ENCODE measurements at regions of chr18 and their contacts with region 1.

Region 1: GRCh38 chr18:24138789-24139616 is at the start of gene CABYR:
- DNase-seq: peak; percentile 54 to 77
- H3K4me3 ChIP-seq: peak within 1 kb of the TSS; percentile 53
- H3K27ac ChIP-seq: peak within 1 kb of the TSS; percentile 91
- H3K4me1 ChIP-seq: peaks cover 31% of the 10 kb centered on the region
- H3K27me3 ChIP-seq: no peaks in the 10 kb centered on the region
- CTCF ChIP-seq: no peak
- total RNA-seq, gene CABYR: 19.5 and 32.4 TPM in 2 replicates

Region 2: GRCh38 chr18:23693845-23694244 is 445.2 kb before region 1 on chr18:
- CTCF ChIA-PET with region 1: no interaction called
- POLR2A ChIA-PET with region 1: interaction called, 10 read pairs
- intact Hi-C with region 1: no loop called
- DNase-seq: no peak
- H3K4me3 ChIP-seq: no peak overlapping the region
- H3K27ac ChIP-seq: 0 out of 2 replicates have a peak overlapping the region, but pooled peaks have one; percentile 10
- H3K4me1 ChIP-seq: peaks cover 34% of the 10 kb centered on the region
- H3K27me3 ChIP-seq: no peaks in the 10 kb centered on the region
- CTCF ChIP-seq: no peak

Region 3: GRCh38 chr18:23967321-23968089 is 171.5 kb before region 1 on chr18:
- CTCF ChIA-PET with region 1: no interaction called
- POLR2A ChIA-PET with region 1: no interaction called
- intact Hi-C with region 1: no loop called
- DNase-seq: no peak
- H3K4me3 ChIP-seq: no peak overlapping the region
- H3K27ac ChIP-seq: no peak overlapping the region
- H3K4me1 ChIP-seq: no peaks in the 10 kb centered on the region
- H3K27me3 ChIP-seq: no peaks in the 10 kb centered on the region
- CTCF ChIP-seq: no peak

Region 4: DNA sequence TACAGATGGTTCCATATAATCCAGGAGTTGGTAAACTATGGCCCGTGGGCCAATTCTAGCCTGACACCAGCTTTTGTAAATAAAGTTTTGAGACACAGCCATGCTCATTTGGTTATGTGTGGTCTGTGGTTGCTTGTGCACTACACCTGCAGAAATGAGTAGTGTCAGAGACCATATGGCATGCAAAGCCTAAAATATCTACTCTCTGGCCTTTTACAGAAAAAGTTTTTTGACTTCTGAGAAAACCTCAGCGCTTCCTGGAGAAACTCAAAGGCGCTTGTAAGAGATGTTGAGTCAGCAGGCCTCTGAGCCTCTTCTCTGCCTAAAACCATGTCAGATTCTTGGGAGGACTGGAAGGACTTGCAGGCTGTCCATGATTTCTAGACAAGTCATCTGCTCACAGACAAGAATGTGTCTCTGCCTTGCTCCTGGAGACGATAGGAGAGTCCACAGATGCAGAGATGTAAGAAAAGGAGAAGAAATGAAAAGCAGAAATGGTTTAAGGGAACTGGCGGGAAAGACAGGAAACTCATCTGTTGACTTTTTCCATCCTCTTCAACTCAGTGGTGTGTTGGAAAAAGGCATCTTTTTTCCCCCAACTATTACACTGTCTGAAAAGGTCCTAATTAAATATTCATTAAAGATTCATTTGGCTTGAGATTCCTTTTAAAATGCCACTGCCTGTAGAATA is 119.2 kb before region 1 on chr18:
- CTCF ChIA-PET with region 1: no interaction called
- POLR2A ChIA-PET with region 1: interaction called, 11 read pairs
- intact Hi-C with region 1: no loop called
- DNase-seq: no peak
- H3K4me3 ChIP-seq: no peak overlapping the region
- H3K27ac ChIP-seq: no peak overlapping the region
- H3K4me1 ChIP-seq: peaks cover 50% of the 10 kb centered on the region
- H3K27me3 ChIP-seq: no peaks in the 10 kb centered on the region
- CTCF ChIP-seq: no peak

Region 5: DNA sequence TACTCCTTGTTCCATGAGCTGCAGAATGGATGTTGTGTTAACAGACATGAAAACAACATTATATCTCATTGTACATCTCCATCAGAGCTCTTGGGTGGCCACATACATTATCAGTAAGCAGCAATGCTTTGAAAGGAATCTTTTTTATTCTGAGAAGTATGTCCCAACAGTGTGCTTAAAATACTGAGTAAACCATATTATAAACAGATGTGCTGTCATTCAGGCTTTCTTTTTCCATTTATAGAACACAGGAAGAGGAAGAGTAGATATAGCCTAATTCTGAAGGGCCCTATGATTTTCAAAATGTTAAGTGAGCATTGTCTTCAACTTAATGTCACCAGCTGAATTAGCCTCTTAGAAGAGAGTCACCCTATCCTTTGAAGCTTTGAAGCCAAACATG is 44.4 kb before region 1 on chr18:
- CTCF ChIA-PET with region 1: no interaction called
- POLR2A ChIA-PET with region 1: no interaction called
- intact Hi-C with region 1: no loop called
- DNase-seq: no peak
- H3K4me3 ChIP-seq: no peak overlapping the region
- H3K27ac ChIP-seq: no peak overlapping the region
- H3K4me1 ChIP-seq: no peaks in the 10 kb centered on the region
- H3K27me3 ChIP-seq: no peaks in the 10 kb centered on the region
- CTCF ChIP-seq: no peak

Region 6: DNA sequence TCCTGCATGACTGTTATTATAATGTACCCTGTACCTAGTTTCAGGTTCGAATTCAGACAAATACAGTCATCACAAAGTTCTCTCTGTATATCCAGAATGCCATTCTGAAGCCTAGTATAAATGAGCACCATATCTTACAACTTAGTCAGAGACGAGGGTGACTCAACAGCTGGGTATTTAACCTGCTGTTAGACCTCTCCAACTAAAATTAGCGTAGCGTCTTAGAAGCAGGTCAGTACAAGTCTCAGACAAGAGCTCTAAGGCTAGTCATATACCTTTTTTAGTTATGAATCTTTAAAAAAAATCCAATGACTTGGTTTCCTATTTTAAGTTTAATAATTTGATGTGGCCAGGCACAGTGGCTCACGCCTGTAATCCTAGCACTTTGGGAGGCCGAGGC is 73.9 kb after region 1 on chr18:
- CTCF ChIA-PET with region 1: no interaction called
- POLR2A ChIA-PET with region 1: interaction called, 6 read pairs
- intact Hi-C with region 1: loop called (anchors 10 kb)
- DNase-seq: peak; percentile 28 to 89
- H3K4me3 ChIP-seq: peak overlapping the region; percentile 26; the same call in 1 of the 2 replicates
- H3K27ac ChIP-seq: peak overlapping the region; percentile 81
- H3K4me1 ChIP-seq: peaks cover 53% of the 10 kb centered on the region
- H3K27me3 ChIP-seq: no peaks in the 10 kb centered on the region
- CTCF ChIP-seq: no peak

Region 7: GRCh38 chr18:24262087-24262486 is 123.1 kb after region 1 on chr18:
- CTCF ChIA-PET with region 1: no interaction called
- POLR2A ChIA-PET with region 1: interaction called, 12 read pairs
- intact Hi-C with region 1: no loop called
- DNase-seq: no peak
- H3K4me3 ChIP-seq: no peak overlapping the region
- H3K27ac ChIP-seq: no peak overlapping the region
- H3K4me1 ChIP-seq: no peaks in the 10 kb centered on the region
- H3K27me3 ChIP-seq: no peaks in the 10 kb centered on the region
- CTCF ChIP-seq: no peak

Measured in PC-9 (cell line).